Heart left ventricle (tissue), 16 donors: ENCODE measurements at regions of chr7 and their contacts with region 1.

Region 1: DNA sequence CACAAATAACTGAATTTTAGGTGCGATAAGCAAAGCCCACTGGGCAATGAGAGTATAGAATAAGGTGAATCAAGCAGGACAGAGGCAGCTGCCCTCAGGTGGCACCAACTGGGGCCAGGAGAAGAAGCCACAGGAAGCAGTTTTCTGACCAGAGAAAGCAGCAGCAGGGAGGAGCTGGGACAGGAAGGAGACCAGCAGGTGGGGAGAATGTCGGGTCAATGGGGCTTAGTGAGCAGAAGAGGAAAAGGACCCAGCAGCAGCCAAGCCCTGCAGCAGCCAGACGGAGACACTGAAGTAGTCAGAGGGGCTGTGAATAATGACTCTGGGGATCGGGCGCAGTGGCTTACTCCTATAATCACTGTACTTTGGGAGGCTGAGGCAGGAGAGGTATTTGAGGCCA is 209.6 kb upstream of the SH2B2 start:
- DNase-seq: no peak
- ATAC-seq: no peak
- H3K4me3 ChIP-seq: no peak overlapping the region
- H3K27ac ChIP-seq: no peak overlapping the region
- H3K4me1 ChIP-seq: peaks cover 0 to 27% (median 8%) of the 10 kb centered on the region in 12 donors
- H3K27me3 ChIP-seq: no peaks in the 10 kb centered on the region
- CTCF ChIP-seq: no peak
- POLR2A ChIP-seq: no peak

Region 2: GRCh38 chr7:102132209-102132752 is 55.2 kb after region 1 on chr7:
- intact Hi-C with region 1: loop called in 1 of 10 experiments (anchors 2 kb)
- DNase-seq: no peak
- ATAC-seq: no peak
- H3K4me3 ChIP-seq: no peak overlapping the region
- H3K27ac ChIP-seq: peak overlapping the region in 1 of 12 donors; percentile 6
- H3K4me1 ChIP-seq: peaks cover 0 to 6% (median 0%) of the 10 kb centered on the region in 12 donors
- H3K27me3 ChIP-seq: no peaks in the 10 kb centered on the region
- CTCF ChIP-seq: no peak
- POLR2A ChIP-seq: no peak